ENCODE measurements at regions of chr3 and their contacts with region 1.

Region 1: GRCh38 chr3:160210799-160211221 is 14.4 kb upstream of the C3orf80 start:
- DNase-seq: peak; percentile 54 to 73 (median 71)
- H3K4me3 ChIP-seq: no peak overlapping the region
- H3K27ac ChIP-seq: no peak overlapping the region
- H3K4me1 ChIP-seq: peaks cover 0 to 5% (median 4%) of the 10 kb centered on the region in 4 experiments
- H3K27me3 ChIP-seq: no peaks in the 10 kb centered on the region

Region 2: GRCh38 chr3:158801696-158802408 is 1409.0 kb before region 1 on chr3 and contains the start of gene MFSD1:
- CTCF ChIA-PET with region 1: no interaction called
- POLR2A ChIA-PET with region 1: no interaction called
- DNase-seq: peak; percentile 81 to 86 (median 82)
- H3K4me3 ChIP-seq: peak within 1 kb of the TSS; percentile 71 to 96 (median 82)
- H3K27ac ChIP-seq: peak within 1 kb of the TSS; percentile 71 to 85
- H3K4me1 ChIP-seq: peaks cover 19 to 35% (median 27%) of the 10 kb centered on the region in 4 experiments
- H3K27me3 ChIP-seq: no peaks in the 10 kb centered on the region

Region 3: DNA sequence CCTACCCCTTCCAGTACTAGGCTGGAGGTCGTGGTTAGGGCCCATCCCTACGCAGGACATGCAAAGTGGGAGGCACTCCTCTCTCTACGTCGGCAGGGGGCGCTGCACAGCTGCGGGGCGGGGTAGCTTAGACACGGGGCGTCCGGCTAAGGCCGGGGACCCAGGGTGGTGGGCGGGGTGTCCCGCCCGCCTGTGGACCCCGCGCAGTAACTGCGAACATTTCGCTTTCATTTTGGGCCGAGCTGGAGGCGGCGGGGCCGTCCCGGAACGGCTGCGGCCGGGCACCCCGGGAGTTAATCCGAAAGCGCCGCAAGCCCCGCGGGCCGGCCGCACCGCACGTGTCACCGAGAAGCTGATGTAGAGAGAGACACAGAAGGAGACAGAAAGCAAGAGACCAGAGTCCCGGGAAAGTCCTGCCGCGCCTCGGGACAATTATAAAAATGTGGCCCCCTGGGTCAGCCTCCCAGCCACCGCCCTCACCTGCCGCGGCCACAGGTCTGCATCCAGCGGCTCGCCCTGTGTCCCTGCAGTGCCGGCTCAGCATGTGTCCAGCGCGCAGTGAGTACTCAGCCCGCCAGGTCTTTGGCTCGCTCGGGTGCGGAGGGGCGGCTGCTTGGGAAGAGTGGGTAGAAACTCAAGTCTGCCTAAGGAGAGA is 222.1 kb before region 1 on chr3 and contains the start of gene IL12A:
- CTCF ChIA-PET with region 1: no interaction called
- POLR2A ChIA-PET with region 1: no interaction called
- DNase-seq: peak; percentile 90 to 93 (median 93)
- H3K4me3 ChIP-seq: peak within 1 kb of the TSS; percentile 68 to 93 (median 75)
- H3K27ac ChIP-seq: peak within 1 kb of the TSS; percentile 19 to 35
- H3K4me1 ChIP-seq: peaks cover 1 to 34% (median 20%) of the 10 kb centered on the region in 4 experiments
- H3K27me3 ChIP-seq: no peaks in the 10 kb centered on the region

Region 4: DNA sequence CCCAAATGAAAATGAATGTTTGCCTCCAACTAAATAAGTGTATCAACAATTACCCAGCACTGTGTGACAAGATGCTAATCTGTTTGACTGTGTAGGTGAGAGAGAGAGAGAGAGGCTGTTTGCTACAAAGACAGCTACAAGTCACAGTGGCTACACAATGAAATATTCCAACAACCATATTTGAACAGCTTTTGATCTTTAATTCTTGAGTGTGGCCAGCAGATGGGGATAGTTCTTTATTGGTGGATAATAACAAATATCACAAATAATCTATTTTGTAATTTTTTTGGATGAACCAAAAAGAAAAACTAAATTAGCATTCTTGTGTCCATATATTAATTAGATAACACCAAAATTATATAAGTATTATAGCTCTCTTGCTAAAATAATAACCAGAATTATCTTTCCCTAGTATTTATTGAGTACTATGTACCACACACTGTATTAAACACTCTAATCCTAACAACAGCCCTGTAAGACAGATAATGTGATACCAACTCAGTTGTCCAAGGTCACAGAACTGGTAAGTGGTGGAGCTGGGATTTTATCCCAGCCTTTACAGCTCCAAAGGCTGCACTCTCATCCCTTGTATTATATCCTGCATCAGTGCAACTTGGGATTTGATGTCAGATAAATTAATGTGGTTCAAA is 47.5 kb before region 1 on chr3:
- CTCF ChIA-PET with region 1: interaction called, 13 read pairs
- POLR2A ChIA-PET with region 1: no interaction called
- DNase-seq: peak; percentile 56 to 62 (median 60)
- H3K4me3 ChIP-seq: no peak overlapping the region
- H3K27ac ChIP-seq: no peak overlapping the region
- H3K4me1 ChIP-seq: peaks cover 0 to 6% (median 2%) of the 10 kb centered on the region in 4 experiments
- H3K27me3 ChIP-seq: no peaks in the 10 kb centered on the region

Region 5: DNA sequence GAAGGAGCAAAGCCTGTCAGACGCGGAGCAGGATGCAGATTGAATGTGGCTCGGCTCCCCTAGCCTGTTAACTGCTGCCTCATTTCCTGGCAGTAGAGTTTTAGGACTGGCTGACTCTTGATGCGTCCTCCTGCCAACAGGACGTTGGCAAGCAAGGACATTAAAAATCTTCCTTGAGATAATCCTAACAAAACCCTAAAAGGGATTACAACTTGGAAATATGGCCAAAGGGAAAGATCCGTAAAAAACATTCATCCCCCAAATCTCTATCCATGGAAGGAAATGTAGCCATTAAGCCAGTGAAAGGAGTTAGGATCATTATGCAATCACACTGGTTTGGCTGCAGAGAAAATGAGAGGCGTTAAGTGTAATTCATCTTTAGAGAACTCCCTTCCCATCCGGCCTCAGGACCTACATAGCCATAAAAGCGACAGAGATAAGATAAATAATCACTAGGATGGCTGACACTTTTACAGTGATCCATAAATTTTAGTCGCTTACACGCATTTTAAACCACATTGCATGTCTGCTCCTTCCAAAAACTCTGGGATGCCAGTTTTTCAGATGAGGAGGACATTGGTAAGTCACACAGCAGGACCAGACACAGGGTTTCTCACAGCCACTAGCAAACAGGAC is 30.1 kb before region 1 on chr3:
- CTCF ChIA-PET with region 1: interaction called, 10 read pairs
- POLR2A ChIA-PET with region 1: no interaction called
- DNase-seq: peak; percentile 76 to 97 (median 94)
- H3K4me3 ChIP-seq: peak overlapping the region in 4 of 7 experiments; percentile 26 to 68 (median 46)
- H3K27ac ChIP-seq: peak overlapping the region; percentile 67 to 80
- H3K4me1 ChIP-seq: peaks cover 31 to 63% (median 47%) of the 10 kb centered on the region in 4 experiments
- H3K27me3 ChIP-seq: no peaks in the 10 kb centered on the region

Region 6: GRCh38 chr3:160185751-160186150 is 25.1 kb before region 1 on chr3:
- CTCF ChIA-PET with region 1: interaction called, 15 read pairs
- POLR2A ChIA-PET with region 1: no interaction called
- DNase-seq: no peak
- H3K4me3 ChIP-seq: peak overlapping the region in 1 of 7 experiments; percentile 14
- H3K27ac ChIP-seq: peak overlapping the region in 1 of 2 experiments; percentile 36
- H3K4me1 ChIP-seq: peaks cover 28 to 58% (median 44%) of the 10 kb centered on the region in 4 experiments
- H3K27me3 ChIP-seq: no peaks in the 10 kb centered on the region

Region 7: DNA sequence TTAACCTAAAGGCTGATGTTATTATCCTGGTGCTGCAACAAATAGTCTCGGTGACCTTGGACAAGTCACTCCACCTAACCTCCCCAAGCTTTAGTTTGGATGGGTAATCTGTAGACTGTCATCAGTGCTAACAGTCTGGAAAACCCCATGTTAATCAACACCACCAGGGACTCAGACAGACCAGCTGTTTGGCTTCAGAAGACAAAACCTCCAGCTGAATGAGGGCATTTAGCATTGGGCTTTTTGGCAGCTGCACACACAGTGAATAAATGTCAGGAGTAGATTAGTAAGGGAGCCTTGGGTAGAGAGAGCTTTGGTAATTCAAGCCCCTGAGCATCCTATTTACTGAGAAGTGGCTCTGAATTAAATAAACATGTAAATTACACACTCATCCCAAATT is 10.5 kb before region 1 on chr3:
- CTCF ChIA-PET with region 1: interaction called, 14 read pairs
- POLR2A ChIA-PET with region 1: no interaction called
- DNase-seq: peak in 2 of 3 donors; percentile 47 to 54
- H3K4me3 ChIP-seq: no peak overlapping the region
- H3K27ac ChIP-seq: no peak overlapping the region
- H3K4me1 ChIP-seq: no peaks in the 10 kb centered on the region
- H3K27me3 ChIP-seq: no peaks in the 10 kb centered on the region

Region 8: GRCh38 chr3:160225176-160226025 is 14.6 kb after region 1 on chr3 and contains the start of gene C3orf80:
- CTCF ChIA-PET with region 1: interaction called, 38 read pairs
- POLR2A ChIA-PET with region 1: no interaction called
- DNase-seq: peak; percentile 75 to 92 (median 92)
- H3K4me3 ChIP-seq: peak within 1 kb of the TSS; percentile 46 to 92 (median 83)
- H3K27ac ChIP-seq: peak within 1 kb of the TSS; percentile 82 to 91
- H3K4me1 ChIP-seq: peaks cover 5 to 72% (median 38%) of the 10 kb centered on the region in 4 experiments
- H3K27me3 ChIP-seq: no peaks in the 10 kb centered on the region

Measured in common myeloid progenitor, CD34-positive (primary cell).